ENCODE measurements at regions of chr7 and their contacts with region 1.

Region 1: DNA sequence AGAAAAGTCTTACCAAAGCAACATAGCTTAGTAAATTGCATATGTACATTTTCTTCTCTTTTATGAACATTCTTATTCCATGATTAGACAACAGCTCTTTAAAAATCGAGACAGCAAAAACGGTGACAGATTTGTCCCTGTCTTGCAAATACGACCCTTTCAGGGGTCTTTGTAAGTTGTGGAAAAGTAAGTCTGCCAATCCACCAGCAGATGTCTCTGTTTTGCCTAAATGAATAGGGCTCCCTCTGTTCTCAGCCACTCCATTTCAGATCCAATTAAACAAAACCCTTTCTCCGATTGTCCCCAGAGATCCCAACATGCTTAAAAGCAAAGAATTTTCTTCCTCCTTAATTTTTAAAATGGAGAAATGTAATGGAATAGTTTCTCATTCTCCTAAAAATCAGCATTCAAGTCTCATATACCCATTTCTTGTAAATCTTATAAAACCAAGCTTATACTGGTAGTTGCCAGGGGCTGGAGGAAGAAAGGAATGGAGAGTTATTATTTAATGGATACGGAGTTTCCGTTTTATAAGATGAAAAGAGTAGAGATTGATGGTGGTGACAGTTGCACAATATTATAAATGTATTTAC is 61.0 kb upstream of the NFE2L3 start:
- DNase-seq: peak; percentile 56
- H3K4me3 ChIP-seq: peak overlapping the region; percentile 24
- CTCF ChIP-seq: peak; percentile 85

Region 2: DNA sequence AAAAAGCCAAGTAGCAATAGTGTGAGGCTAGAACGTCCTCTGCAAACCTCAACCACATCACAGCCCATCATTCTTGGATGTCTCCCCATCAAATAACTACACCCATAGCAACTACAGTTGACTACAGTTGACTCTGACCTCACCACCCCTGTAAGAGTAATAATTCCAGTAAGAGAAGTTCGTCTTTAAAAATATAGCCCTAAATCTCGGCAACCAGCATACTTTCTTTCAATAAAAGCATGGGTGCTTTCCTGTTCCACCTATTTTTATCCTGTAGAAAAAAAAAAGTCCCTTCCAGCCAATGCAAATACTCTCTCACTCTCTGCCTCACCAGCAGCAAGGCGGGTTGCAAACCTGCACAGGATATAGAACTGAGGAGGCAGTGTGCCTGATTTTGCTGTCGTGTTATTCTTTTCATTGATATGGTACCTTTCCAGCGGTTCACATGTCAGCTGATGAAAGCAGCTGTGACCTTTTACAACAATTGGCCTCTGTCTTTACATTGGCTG is 126.5 kb before region 1 on chr7:
- in situ Hi-C with region 1: no loop called
- DNase-seq: no peak
- H3K4me3 ChIP-seq: no peak overlapping the region
- CTCF ChIP-seq: no peak

Region 3: DNA sequence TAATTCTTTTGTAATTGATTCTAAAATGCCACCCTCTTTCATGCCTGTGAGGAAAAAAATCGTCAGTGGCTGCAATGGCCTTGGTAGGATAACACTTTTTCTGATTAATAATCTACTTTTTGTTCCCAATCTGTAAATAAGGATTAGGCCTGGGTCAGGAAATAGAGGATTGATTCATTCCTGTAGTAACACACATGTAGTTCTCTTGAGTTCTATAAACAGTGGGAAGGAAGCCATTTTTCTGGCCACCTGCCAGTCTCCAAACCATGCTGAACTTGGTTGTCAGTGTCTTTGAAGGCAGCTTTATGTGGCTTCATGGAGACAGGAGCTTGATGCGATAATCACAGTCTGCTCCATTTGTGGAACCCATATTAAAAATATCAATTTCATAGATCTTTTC is 108.3 kb before region 1 on chr7:
- in situ Hi-C with region 1: no loop called
- DNase-seq: no peak
- H3K4me3 ChIP-seq: no peak overlapping the region
- CTCF ChIP-seq: no peak

Region 4: GRCh38 chr7:26151953-26152781 is 61.1 kb after region 1 on chr7 and contains the start of gene NFE2L3:
- in situ Hi-C with region 1: no loop called
- DNase-seq: peak; percentile 18
- H3K4me3 ChIP-seq: peak within 1 kb of the TSS; percentile 53
- CTCF ChIP-seq: no peak

Region 5: GRCh38 chr7:26170663-26171062 is 79.6 kb after region 1 on chr7:
- in situ Hi-C with region 1: loop called (anchors 5 kb)
- DNase-seq: no peak
- H3K4me3 ChIP-seq: no peak overlapping the region
- CTCF ChIP-seq: no peak

Region 6: DNA sequence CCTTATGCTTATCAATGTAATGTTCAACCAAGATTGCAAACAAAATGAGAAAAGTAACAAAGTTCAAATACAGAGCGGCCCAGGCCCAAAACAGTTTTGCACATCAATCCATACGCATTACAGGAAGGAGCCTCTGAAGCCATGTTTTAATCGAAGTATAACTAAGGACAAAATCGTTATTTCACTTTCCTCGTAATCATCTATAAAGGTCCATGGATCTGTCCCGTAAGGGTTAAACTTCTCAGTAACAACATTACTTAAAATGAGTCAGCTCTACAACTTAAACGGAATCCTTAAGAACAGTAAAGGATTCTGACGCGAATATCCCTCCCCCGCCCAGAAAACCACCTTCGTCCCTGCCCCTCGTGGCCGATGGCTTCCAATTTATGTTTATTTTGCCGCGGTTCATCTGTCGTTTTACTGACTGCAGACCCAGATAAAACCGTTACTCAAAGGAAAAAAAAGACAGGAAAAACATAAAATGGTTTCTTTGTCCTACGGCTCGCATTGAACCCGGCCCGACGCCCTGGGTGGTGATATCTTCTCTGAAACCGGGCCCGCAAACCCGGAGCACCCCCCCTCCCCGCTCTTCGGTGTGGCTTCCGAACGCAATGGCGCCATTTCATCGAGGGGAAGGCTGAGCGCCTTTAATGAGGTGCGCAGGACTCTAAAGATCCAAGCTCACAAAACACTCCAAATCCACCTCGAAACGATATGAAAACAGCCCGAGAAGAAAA is 108.4 kb after region 1 on chr7:
- in situ Hi-C with region 1: loop called (anchors 5 kb)
- DNase-seq: no peak
- H3K4me3 ChIP-seq: peak overlapping the region; percentile 100
- CTCF ChIP-seq: no peak